IMR-90 (cell line): ENCODE measurements at regions of chr4 and their contacts with region 1.

Region 1: DNA sequence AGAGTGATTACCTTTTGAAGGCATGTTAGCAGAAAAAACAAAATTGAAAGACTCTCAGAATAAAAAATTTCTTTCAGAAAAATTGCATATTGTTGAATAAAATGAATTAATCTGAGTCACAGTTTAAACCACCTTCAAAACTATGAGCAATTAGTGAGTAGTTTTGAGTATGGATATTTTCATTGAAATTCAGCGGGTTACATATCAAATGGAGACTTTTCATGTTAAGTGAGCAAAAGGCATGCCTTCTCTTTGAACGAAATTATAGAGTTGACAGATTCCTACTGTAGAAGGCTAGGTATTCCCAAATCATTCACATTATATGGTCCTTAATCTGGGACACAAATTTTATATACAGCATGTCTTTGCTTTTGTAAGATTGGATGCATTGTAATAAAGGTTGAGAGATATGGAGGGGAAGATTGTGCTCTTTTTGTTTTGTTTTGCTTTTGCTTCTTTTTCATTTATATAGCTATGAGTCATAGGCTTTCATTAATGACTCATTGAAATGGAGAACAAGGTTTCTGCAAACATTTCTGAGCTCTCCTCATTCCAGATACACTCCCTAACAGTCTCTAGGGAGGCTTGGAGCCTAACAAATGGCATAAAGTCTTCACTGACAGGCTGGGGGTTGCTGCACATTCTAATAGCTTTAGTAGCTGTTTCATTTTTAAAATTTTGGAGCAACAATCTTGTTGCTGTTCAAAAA is 21.6 kb downstream of the PCDH18 start:
- DNase-seq: peak; percentile 96
- ATAC-seq: peak; percentile 99
- H3K4me3 ChIP-seq: no peak overlapping the region
- H3K27ac ChIP-seq: peak overlapping the region; percentile 34; the same call in 1 of the 2 replicates
- H3K4me1 ChIP-seq: peaks cover 5% of the 10 kb centered on the region; the same call in 1 of the 2 replicates
- H3K27me3 ChIP-seq: no peaks in the 10 kb centered on the region
- CTCF ChIP-seq: no peak
- POLR2A ChIP-seq: no peak
- RAD21 ChIP-seq: no peak

Region 2: DNA sequence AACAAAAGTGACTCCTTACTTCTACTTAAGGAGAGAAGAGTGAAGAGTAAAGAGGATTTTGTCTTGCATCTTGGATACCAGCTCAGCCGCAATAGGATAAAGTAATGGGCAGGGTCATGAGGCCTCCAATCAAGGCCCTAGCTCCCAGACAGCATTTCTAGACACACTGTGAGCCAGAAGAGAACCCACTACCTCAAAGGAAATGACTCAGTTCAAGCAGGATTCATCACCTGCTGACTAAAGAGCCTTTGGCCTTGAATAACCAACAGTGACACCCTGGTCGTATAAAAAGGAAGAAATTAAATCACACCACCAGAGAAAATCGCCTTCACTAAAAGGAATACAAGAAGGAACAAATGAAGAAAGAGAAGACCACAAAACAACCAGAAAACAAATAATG is 394.6 kb before region 1 on chr4:
- CTCF ChIA-PET with region 1: no interaction called
- POLR2A ChIA-PET with region 1: no interaction called
- dilution Hi-C with region 1: no loop called
- in situ Hi-C with region 1: no loop called
- intact Hi-C with region 1: no loop called
- DNase-seq: peak; percentile 6
- ATAC-seq: no peak
- H3K4me3 ChIP-seq: no peak overlapping the region
- H3K27ac ChIP-seq: no peak overlapping the region
- H3K4me1 ChIP-seq: no peaks in the 10 kb centered on the region
- H3K27me3 ChIP-seq: no peaks in the 10 kb centered on the region
- CTCF ChIP-seq: no peak
- POLR2A ChIP-seq: no peak
- RAD21 ChIP-seq: no peak

Region 3: GRCh38 chr4:137283737-137284136 is 227.0 kb before region 1 on chr4:
- CTCF ChIA-PET with region 1: no interaction called
- POLR2A ChIA-PET with region 1: no interaction called
- dilution Hi-C with region 1: no loop called
- in situ Hi-C with region 1: loop called (anchors 25 kb)
- intact Hi-C with region 1: no loop called
- DNase-seq: peak; percentile 39
- ATAC-seq: peak; percentile 63; the same call in 1 of the 2 replicates
- H3K4me3 ChIP-seq: no peak overlapping the region
- H3K27ac ChIP-seq: no peak overlapping the region
- H3K4me1 ChIP-seq: no peaks in the 10 kb centered on the region
- H3K27me3 ChIP-seq: no peaks in the 10 kb centered on the region
- CTCF ChIP-seq: peak; percentile 56
- POLR2A ChIP-seq: no peak
- RAD21 ChIP-seq: peak; percentile 55